Left ventricle myocardium inferior (tissue), 1 donor: ENCODE measurements at regions of chr18 and their contacts with region 1.

Region 1: DNA sequence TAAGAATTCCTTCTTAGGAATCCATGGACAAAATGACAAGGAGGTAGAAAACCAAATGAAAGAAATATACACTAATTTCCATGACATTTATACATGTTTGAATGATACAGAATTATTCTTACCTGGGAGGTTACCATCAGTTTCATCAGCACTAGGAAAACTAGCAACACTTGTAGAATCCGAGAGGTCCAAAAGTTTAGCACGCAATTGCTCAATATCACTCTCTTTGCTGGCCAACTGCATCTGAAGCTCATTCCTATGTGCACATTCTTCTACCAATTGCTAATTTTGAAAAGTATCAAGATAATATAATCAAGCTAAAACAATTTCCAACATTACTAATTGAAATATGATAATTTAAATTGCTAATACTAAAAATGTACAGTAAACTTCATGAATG is 144.8 kb downstream of the ROCK1 start:
- DNase-seq: no peak
- H3K4me3 ChIP-seq: no peak overlapping the region
- H3K27ac ChIP-seq: no peak overlapping the region
- H3K4me1 ChIP-seq: no peaks in the 10 kb centered on the region
- H3K27me3 ChIP-seq: no peaks in the 10 kb centered on the region
- CTCF ChIP-seq: no peak

Region 2: GRCh38 chr18:21012308-21012707 is 45.5 kb after region 1 on chr18:
- intact Hi-C with region 1: loop called (anchors 10 kb)
- DNase-seq: no peak
- H3K4me3 ChIP-seq: no peak overlapping the region
- H3K27ac ChIP-seq: no peak overlapping the region
- H3K4me1 ChIP-seq: no peaks in the 10 kb centered on the region
- H3K27me3 ChIP-seq: no peaks in the 10 kb centered on the region
- CTCF ChIP-seq: no peak

Region 3: GRCh38 chr18:21109936-21110663 is 143.3 kb after region 1 on chr18:
- intact Hi-C with region 1: loop called (anchors 10 kb)
- DNase-seq: no peak
- H3K4me3 ChIP-seq: peak overlapping the region; percentile 96
- H3K27ac ChIP-seq: peak overlapping the region; percentile 97
- H3K4me1 ChIP-seq: peaks cover 78% of the 10 kb centered on the region
- H3K27me3 ChIP-seq: no peaks in the 10 kb centered on the region
- CTCF ChIP-seq: no peak

Region 4: GRCh38 chr18:21682371-21683051 is 715.7 kb after region 1 on chr18:
- intact Hi-C with region 1: no loop called
- DNase-seq: no peak
- H3K4me3 ChIP-seq: peak overlapping the region; percentile 57
- H3K27ac ChIP-seq: peak overlapping the region; percentile 81
- H3K4me1 ChIP-seq: peaks cover 22% of the 10 kb centered on the region
- H3K27me3 ChIP-seq: no peaks in the 10 kb centered on the region
- CTCF ChIP-seq: no peak